Breast epithelium (tissue), 4 donors: ENCODE measurements at regions of chr12 and their contacts with region 1.

Region 1: GRCh38 chr12:41932470-41932991 is 212.1 kb downstream of the GXYLT1 start:
- DNase-seq: peak; percentile 39 to 58
- H3K4me3 ChIP-seq: peak overlapping the region; percentile 47 to 68 (median 59)
- H3K27ac ChIP-seq: peak overlapping the region; percentile 40 to 51
- H3K4me1 ChIP-seq: no peaks in the 10 kb centered on the region
- H3K27me3 ChIP-seq: no peaks in the 10 kb centered on the region
- CTCF ChIP-seq: no peak
- POLR2A ChIP-seq: no peak

Region 2: GRCh38 chr12:41892302-41892701 is 40.2 kb before region 1 on chr12:
- intact Hi-C with region 1: no loop called
- DNase-seq: no peak
- H3K4me3 ChIP-seq: no peak overlapping the region
- H3K27ac ChIP-seq: no peak overlapping the region
- H3K4me1 ChIP-seq: no peaks in the 10 kb centered on the region
- H3K27me3 ChIP-seq: no peaks in the 10 kb centered on the region
- CTCF ChIP-seq: no peak
- POLR2A ChIP-seq: no peak

Region 3: DNA sequence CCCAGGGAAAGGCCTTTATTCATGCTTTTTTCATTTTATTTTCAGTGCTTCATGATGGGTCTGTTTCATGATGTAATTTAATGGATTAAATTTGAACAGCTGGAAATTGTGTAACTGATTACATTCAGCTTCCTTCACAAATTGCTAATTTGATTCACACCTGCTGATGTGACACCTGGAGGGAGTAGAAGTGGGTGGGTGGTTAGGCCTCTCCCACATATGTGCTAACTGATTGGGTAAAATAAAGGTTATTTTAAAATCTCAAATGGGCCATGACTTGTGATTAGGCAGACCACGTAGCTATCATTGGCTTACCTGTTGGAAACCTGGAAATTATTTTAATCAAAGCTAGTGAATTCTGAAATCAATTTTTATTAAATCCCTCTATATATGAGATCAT is 70.0 kb after region 1 on chr12:
- intact Hi-C with region 1: loop called (anchors 2 kb)
- DNase-seq: no peak
- H3K4me3 ChIP-seq: no peak overlapping the region
- H3K27ac ChIP-seq: no peak overlapping the region
- H3K4me1 ChIP-seq: no peaks in the 10 kb centered on the region
- H3K27me3 ChIP-seq: no peaks in the 10 kb centered on the region
- CTCF ChIP-seq: no peak
- POLR2A ChIP-seq: no peak

Region 4: DNA sequence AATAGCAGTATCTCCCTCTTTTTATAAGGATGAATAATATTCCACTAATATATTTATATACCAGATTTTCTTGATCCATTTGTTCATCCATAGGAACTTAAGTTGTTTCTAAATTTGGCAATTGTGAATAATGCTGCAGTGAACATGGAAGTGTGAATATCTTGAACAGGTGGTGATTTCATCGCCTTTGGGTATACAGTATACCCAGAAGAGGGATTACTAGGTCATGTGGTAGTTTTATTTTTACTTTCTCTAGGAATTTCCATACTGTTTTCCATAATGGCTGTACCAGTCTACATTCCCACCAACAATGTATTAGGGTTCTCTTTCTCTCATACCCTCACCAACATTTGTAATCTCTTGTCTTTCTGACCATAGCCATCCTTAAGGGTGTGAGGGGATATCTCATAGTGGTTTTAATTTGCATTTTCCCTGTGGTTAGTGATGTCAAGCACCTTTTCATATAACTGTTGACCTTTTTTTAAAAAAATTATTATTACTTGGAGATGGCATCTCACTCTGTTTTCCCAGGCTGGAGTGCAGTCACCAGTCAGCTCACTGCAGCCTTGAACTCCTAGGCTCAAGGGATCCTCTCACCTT is 414.0 kb after region 1 on chr12:
- intact Hi-C with region 1: loop called (anchors 5 kb)
- DNase-seq: no peak
- H3K4me3 ChIP-seq: no peak overlapping the region
- H3K27ac ChIP-seq: no peak overlapping the region
- H3K4me1 ChIP-seq: no peaks in the 10 kb centered on the region
- H3K27me3 ChIP-seq: no peaks in the 10 kb centered on the region
- CTCF ChIP-seq: no peak
- POLR2A ChIP-seq: no peak